CD8-positive, alpha-beta T cell (primary cell): ENCODE measurements at regions of chr12 and their contacts with region 1.

Region 1: DNA sequence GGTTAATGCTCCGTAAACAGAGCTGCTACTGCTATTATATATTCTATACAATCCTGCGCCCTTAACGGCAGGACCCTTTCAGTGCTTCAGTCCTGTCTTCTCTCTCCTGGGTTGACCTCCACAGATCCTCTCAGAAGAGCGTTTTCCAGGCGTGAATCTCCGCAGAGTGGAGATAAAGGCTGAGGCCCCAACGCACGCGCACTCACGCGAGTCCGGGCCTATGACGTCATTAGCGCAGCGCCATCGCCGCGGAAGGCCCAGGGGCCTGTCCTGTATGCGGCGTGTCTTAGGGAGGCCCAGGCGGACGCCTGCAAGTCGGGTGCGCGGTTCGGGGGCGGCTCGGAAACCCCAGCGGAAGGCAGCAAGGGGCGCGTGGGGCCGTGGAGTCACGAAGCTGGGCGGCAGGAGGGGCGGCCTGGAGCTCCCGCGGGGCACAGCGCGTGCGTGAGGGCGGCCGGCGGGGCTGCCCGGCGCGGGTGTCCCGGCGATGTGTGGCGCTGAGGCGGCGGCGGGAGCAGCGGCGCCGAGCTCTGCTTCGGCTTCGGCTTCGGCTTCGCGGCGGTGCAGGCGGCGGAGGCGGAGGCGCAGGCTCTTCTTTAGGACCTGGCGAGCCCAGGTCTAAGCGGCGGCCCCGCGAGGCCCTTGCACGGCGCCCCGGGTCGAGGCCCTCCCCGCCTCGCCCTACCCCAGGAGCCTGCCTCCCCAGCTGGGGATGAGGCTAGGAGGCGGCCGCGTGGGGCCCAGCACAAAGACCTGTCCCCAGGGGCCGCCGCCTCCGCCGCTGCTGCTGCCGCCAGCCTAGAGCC is at the start of gene MAPKAPK5:
- DNase-seq: peak; percentile 96 to 100 (median 98)
- ATAC-seq: peak; percentile 87
- H3K4me3 ChIP-seq: peak within 1 kb of the TSS; percentile 79 to 91
- H3K4me3 Mint-ChIP-seq: peak within 1 kb of the TSS; percentile 98
- H3K27ac ChIP-seq: peak within 1 kb of the TSS; percentile 82 to 91
- H3K27ac Mint-ChIP-seq: peak within 1 kb of the TSS; percentile 99
- H3K4me1 ChIP-seq: peaks cover 42% of the 10 kb centered on the region
- H3K4me1 Mint-ChIP-seq: peaks cover 64% of the 10 kb centered on the region
- H3K27me3 ChIP-seq: no peaks in the 10 kb centered on the region
- H3K27me3 Mint-ChIP-seq: no peaks in the 10 kb centered on the region
- CTCF ChIP-seq: no peak
- total RNA-seq, gene MAPKAPK5: 65.6 to 68.0 TPM

Region 2: GRCh38 chr12:110124184-110124995 is 1717.6 kb before region 1 on chr12 and contains the start of gene IFT81:
- CTCF ChIA-PET with region 1: no interaction called
- POLR2A ChIA-PET with region 1: no interaction called
- intact Hi-C with region 1: loop called in 1 of 2 experiments (anchors 10 kb)
- DNase-seq: peak; percentile 94 to 99 (median 96)
- ATAC-seq: peak; percentile 95
- H3K4me3 ChIP-seq: peak within 1 kb of the TSS; percentile 69 to 96
- H3K4me3 Mint-ChIP-seq: peak within 1 kb of the TSS; percentile 91
- H3K27ac ChIP-seq: peak within 1 kb of the TSS; percentile 60 to 73
- H3K27ac Mint-ChIP-seq: peak within 1 kb of the TSS; percentile 83
- H3K4me1 ChIP-seq: peaks cover 10% of the 10 kb centered on the region
- H3K4me1 Mint-ChIP-seq: peaks cover 8% of the 10 kb centered on the region
- H3K27me3 ChIP-seq: no peaks in the 10 kb centered on the region
- H3K27me3 Mint-ChIP-seq: peaks cover 3% of the 10 kb centered on the region
- CTCF ChIP-seq: no peak
- total RNA-seq, gene IFT81: 0.25 to 0.43 TPM

Region 3: DNA sequence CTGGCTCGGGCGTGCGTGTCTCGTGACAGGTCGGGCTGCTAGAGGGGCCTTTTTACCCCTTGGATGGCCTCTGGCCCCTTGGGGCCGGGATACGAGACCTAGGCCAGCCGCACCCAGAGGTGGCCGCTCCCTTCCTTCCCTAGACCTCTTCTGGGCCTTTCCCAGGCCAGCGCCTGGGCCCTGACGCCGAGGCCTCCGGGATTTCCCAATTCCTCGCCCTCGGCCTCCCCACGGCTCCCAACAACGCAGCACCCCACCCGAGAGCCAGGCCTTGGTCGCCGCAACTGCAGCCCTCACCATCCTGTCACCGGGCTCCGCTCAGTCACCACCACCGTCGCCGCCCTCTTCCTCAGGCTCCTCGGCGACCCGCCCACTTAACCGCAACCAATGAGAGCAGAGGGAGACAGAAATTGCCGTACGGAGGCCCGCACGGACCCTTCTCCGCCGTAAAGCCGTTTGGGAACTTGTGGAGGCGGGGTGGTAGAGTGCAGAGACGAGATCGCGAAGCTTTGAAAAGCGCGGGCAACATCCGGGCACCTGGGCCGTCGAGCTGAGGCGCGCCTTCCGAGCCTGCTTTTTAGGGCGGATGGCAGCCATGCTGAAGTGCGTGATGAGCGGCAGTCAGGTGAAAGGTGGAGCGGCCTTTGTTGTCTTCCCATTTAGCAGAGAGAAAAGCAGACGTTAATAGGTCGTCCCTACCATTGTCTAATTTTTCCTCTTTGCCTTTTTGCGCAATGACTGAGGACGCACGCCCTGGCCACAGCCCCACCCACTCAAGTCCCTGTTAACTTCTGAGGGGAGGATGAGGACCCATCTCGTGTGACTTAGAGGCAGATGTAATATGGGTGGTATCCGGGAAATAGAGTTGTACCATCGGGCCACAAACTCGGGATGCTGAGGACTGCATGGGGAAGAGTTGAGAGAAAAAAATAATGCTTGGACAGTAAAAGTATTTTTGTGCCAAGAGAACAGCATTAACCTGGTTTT is 1339.9 kb before region 1 on chr12 and contains the starts of genes RAD9B and VPS29:
- CTCF ChIA-PET with region 1: no interaction called
- POLR2A ChIA-PET with region 1: no interaction called
- intact Hi-C with region 1: loop called in 1 of 2 experiments (anchors 5 kb)
- DNase-seq: peak; percentile 98 to 100 (median 99)
- ATAC-seq: peak; percentile 92
- H3K4me3 ChIP-seq: peak within 1 kb of the TSS; percentile 73 to 79
- H3K4me3 Mint-ChIP-seq: peak within 1 kb of the TSS; percentile 97
- H3K27ac ChIP-seq: peak within 1 kb of the TSS; percentile 74 to 89
- H3K27ac Mint-ChIP-seq: peak within 1 kb of the TSS; percentile 97
- H3K4me1 ChIP-seq: peaks cover 17% of the 10 kb centered on the region
- H3K4me1 Mint-ChIP-seq: peaks cover 38% of the 10 kb centered on the region
- H3K27me3 ChIP-seq: no peaks in the 10 kb centered on the region
- H3K27me3 Mint-ChIP-seq: no peaks in the 10 kb centered on the region
- CTCF ChIP-seq: no peak
- total RNA-seq, gene RAD9B: 0.57 to 1.5 TPM
- total RNA-seq, gene VPS29: 49.6 to 53.5 TPM

Region 4: DNA sequence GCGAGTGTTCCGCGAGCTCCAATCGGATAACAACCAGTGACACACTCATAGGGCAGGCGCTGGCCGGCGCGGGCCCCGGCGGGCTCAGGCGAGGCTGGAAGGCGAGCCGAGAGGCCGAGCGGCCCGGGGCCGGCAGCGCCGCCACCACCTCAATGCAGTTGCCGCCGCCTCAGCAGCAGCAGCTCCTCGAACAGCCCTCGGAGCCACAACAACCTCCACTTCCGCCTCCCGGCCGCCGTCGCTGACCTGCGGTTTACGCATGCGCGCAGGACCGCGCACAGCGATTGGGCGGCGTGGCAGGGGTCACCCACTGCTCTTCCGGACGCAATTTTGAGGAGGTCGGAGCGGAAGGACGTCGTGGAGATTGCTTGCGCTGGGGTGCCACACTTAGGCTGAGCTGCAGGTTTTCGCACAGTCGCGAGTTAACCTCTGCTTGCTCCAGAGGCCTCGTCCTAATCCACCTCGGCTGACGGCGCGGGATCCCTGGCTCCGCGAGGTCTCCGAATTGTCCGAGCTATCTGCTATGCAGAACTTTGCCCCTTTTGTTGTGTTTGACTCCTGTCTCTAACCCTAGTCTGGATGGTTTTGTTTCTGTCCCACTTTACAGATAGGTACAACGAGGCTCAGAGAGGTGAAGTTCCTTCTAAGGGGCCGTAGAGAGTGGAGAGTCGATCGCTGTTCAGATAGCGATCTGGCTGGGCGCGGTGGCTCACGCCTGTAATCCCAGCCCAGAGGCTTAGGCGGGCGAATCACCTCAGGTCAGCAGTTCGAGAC is 156.0 kb before region 1 on chr12 and contains the starts of genes ACAD10 and BRAP:
- CTCF ChIA-PET with region 1: no interaction called
- POLR2A ChIA-PET with region 1: interaction called, 4 read pairs
- intact Hi-C with region 1: loop called (anchors 1 to 5 kb)
- DNase-seq: peak; percentile 89 to 97 (median 94)
- ATAC-seq: peak; percentile 92
- H3K4me3 ChIP-seq: peak within 1 kb of the TSS; percentile 77 to 95
- H3K4me3 Mint-ChIP-seq: peak within 1 kb of the TSS; percentile 95
- H3K27ac ChIP-seq: peak within 1 kb of the TSS; percentile 82 to 92
- H3K27ac Mint-ChIP-seq: peak within 1 kb of the TSS; percentile 95
- H3K4me1 ChIP-seq: peaks cover 27% of the 10 kb centered on the region
- H3K4me1 Mint-ChIP-seq: peaks cover 39% of the 10 kb centered on the region
- H3K27me3 ChIP-seq: no peaks in the 10 kb centered on the region
- H3K27me3 Mint-ChIP-seq: no peaks in the 10 kb centered on the region
- CTCF ChIP-seq: no peak
- total RNA-seq, gene ACAD10: 12.3 to 13.6 TPM
- total RNA-seq, gene BRAP: 29.3 to 30.4 TPM

Region 5: DNA sequence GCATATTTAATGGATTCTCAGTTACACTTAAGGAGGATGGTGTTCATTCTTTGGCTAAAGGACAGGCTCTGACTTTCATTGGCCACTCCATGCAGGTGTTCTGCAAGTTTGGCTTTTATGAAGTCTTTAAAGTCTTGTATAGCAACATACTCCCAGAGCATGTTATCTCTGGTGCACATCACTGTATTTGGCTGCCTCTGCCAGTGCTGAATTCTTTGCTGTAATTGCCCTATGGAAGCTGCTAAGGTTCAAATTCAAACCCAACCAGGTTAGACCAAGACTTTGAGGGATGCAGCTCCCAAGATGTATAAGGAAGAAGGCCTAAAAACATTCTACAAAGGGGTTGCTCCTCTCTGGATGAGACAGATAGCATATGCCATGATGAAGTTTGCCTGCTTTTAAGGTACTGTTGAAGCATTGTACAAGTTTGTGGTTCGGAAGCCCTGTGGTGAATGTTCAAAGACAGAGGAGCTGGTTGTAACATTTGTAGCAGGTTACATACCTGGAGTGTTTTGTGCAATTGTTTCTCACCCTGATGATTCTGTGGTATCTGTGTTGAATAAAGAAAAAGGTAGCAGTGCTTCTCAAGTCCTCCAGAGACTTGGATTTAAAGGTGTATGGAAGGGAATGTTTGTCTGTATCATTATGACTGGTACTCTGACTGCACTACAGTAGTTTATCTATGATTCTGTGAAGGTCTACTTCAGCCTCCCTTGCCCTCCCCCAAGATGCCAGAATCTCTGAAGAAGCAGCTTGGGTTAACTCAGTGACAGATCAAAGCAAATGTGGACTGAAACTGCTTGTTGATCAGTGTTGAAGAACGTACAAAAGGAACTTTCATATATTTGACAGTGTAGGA is 151.6 kb after region 1 on chr12:
- CTCF ChIA-PET with region 1: no interaction called
- POLR2A ChIA-PET with region 1: no interaction called
- intact Hi-C with region 1: loop called in 1 of 2 experiments (anchors 5 kb)
- DNase-seq: peak in 6 of 9 experiments; percentile 29 to 73 (median 54)
- ATAC-seq: peak; percentile 80
- H3K4me3 ChIP-seq: peak overlapping the region; percentile 43 to 53
- H3K4me3 Mint-ChIP-seq: peak overlapping the region; percentile 84
- H3K27ac ChIP-seq: peak overlapping the region; percentile 36 to 74
- H3K27ac Mint-ChIP-seq: peak overlapping the region; percentile 91
- H3K4me1 ChIP-seq: peaks cover 70% of the 10 kb centered on the region
- H3K4me1 Mint-ChIP-seq: peaks cover 72% of the 10 kb centered on the region
- H3K27me3 ChIP-seq: no peaks in the 10 kb centered on the region
- H3K27me3 Mint-ChIP-seq: no peaks in the 10 kb centered on the region
- CTCF ChIP-seq: no peak

Region 6: DNA sequence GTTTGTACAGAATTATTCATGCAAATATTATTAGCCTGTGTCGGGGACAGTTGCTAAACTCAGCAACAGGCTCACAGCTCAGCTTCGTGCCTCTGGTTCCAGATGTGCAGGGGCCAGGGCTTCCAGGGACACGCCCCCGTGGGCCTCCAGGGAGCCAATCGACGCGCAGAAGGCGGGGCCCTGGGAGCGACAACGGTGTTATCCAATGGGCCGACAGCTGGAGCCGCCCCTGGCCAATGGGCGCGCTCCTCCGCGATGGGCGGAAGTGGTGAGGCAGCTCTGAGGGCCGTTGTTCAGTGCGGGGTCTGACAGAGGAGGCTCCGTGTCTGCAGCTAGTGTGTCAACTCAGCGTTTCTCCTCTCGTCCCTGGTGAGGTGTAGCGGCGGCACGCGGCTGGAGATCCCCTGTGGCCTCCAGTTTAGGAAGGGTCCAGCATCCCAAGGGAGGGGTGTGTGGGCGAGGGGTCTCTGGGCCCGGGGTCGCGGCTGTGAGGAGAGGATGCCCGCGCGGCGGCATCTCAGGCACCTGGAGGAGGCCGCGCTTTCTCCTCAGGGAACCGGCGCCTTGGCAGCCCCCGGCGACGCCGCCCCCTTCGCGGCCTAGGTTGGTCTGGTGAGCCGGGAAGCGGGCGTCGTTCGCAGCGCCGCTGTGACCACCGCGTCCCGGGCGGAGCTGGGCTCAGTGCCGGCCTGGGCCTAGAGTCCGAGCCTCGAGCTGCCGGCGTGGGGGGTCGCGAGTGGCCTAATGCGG is 283.5 kb after region 1 on chr12 and contains the start of gene TRAFD1:
- CTCF ChIA-PET with region 1: interaction called, 4 read pairs
- POLR2A ChIA-PET with region 1: interaction called, 5 read pairs
- intact Hi-C with region 1: loop called in 1 of 2 experiments (anchors 5 kb)
- DNase-seq: peak; percentile 96 to 99 (median 98)
- ATAC-seq: peak; percentile 97
- H3K4me3 ChIP-seq: peak within 1 kb of the TSS; percentile 93 to 98
- H3K4me3 Mint-ChIP-seq: peak within 1 kb of the TSS; percentile 85
- H3K27ac ChIP-seq: peak within 1 kb of the TSS; percentile 82 to 89
- H3K27ac Mint-ChIP-seq: peak within 1 kb of the TSS; percentile 87
- H3K4me1 ChIP-seq: peaks cover 38% of the 10 kb centered on the region
- H3K4me1 Mint-ChIP-seq: peaks cover 40% of the 10 kb centered on the region
- H3K27me3 ChIP-seq: no peaks in the 10 kb centered on the region
- H3K27me3 Mint-ChIP-seq: no peaks in the 10 kb centered on the region
- CTCF ChIP-seq: no peak
- total RNA-seq, gene TRAFD1: 21.1 to 25.4 TPM